CD4-positive, alpha-beta memory T cell (primary cell): ENCODE measurements at regions of chr1 and their contacts with region 1.

Region 1: GRCh38 chr1:234722904-234723720 is 113.1 kb upstream of the IRF2BP2 start:
- DNase-seq: peak in 1 of 5 donors; percentile 82
- H3K4me3 ChIP-seq: peak overlapping the region; percentile 0 to 41
- H3K4me3 Mint-ChIP-seq: peak overlapping the region; percentile 70 to 89 (median 82)
- H3K27ac ChIP-seq: peak overlapping the region; percentile 96
- H3K27ac Mint-ChIP-seq: peak overlapping the region; percentile 95 to 100 (median 98)
- H3K4me1 ChIP-seq: peaks cover 66% of the 10 kb centered on the region
- H3K4me1 Mint-ChIP-seq: peaks cover 45 to 85% (median 65%) of the 10 kb centered on the region in 4 donors
- H3K27me3 ChIP-seq: no peaks in the 10 kb centered on the region
- H3K27me3 Mint-ChIP-seq: peaks cover 0 to 3% of the 10 kb centered on the region in 2 donors

Region 2: GRCh38 chr1:234758851-234759250 is 35.7 kb after region 1 on chr1:
- CTCF ChIA-PET with region 1: interaction called, 3 read pairs
- POLR2A ChIA-PET with region 1: interaction called, 15 read pairs
- intact Hi-C with region 1: no loop called
- DNase-seq: peak; percentile 78 to 89 (median 83)
- H3K4me3 ChIP-seq: no peak overlapping the region
- H3K4me3 Mint-ChIP-seq: peak overlapping the region; percentile 27 to 85 (median 70)
- H3K27ac ChIP-seq: peak overlapping the region; percentile 36
- H3K27ac Mint-ChIP-seq: peak overlapping the region; percentile 88 to 99 (median 97)
- H3K4me1 ChIP-seq: peaks cover 39% of the 10 kb centered on the region
- H3K4me1 Mint-ChIP-seq: peaks cover 22 to 49% (median 33%) of the 10 kb centered on the region in 4 donors
- H3K27me3 ChIP-seq: no peaks in the 10 kb centered on the region
- H3K27me3 Mint-ChIP-seq: no peaks in the 10 kb centered on the region

Region 3: DNA sequence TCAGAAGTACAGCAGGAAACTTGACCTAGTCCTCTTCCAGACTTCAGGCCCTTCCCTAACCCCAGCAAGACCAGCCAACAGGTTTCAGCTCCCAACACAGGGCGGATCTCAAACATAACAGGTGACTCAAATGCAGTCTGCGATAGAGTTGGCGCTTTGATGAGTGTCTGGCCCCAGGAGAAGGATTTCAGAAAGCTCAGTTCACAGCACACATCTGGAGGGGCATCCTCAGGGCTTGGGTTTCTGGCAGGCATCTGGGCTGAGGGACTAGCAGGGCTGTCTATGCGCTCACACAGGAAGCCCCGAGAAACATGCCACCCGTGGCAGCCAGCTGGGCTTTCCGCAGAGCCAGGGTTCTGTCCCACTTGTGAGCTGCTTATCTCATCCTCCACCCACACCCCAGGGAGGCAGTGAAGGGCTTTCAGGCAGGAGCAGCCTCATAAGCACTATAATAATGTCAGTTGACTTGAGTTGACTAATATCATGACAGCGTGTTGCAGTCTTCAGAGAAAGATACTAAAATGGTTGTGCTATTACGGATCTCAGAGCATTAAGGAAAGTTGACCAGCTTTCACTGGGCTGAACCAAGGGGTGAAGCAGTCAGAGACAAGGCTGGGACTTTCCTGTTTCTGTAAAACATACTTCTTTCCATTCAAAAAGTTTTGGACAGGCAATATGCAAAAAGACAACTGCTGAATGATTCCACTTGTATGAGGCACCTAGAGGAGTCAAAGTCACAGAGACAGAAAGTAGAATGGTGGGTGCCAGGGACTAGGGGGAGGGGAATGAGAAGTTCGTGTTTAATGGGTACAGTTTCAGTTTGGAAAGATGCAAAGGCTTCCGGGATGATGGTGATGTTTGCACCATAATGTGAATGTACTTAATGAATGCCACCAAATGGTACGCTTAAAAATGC is 119.9 kb after region 1 on chr1:
- CTCF ChIA-PET with region 1: interaction called, 4 read pairs
- POLR2A ChIA-PET with region 1: interaction called, 40 read pairs
- intact Hi-C with region 1: loop called (anchors 2 kb)
- DNase-seq: peak; percentile 34 to 76 (median 44)
- H3K4me3 ChIP-seq: peak overlapping the region in 1 of 2 donors; percentile 28
- H3K4me3 Mint-ChIP-seq: peak overlapping the region; percentile 33 to 83 (median 58)
- H3K27ac ChIP-seq: peak overlapping the region; percentile 39
- H3K27ac Mint-ChIP-seq: peak overlapping the region; percentile 76 to 91 (median 83)
- H3K4me1 ChIP-seq: peaks cover 65% of the 10 kb centered on the region
- H3K4me1 Mint-ChIP-seq: peaks cover 47 to 73% (median 60%) of the 10 kb centered on the region in 4 donors
- H3K27me3 ChIP-seq: no peaks in the 10 kb centered on the region
- H3K27me3 Mint-ChIP-seq: no peaks in the 10 kb centered on the region

Region 4: DNA sequence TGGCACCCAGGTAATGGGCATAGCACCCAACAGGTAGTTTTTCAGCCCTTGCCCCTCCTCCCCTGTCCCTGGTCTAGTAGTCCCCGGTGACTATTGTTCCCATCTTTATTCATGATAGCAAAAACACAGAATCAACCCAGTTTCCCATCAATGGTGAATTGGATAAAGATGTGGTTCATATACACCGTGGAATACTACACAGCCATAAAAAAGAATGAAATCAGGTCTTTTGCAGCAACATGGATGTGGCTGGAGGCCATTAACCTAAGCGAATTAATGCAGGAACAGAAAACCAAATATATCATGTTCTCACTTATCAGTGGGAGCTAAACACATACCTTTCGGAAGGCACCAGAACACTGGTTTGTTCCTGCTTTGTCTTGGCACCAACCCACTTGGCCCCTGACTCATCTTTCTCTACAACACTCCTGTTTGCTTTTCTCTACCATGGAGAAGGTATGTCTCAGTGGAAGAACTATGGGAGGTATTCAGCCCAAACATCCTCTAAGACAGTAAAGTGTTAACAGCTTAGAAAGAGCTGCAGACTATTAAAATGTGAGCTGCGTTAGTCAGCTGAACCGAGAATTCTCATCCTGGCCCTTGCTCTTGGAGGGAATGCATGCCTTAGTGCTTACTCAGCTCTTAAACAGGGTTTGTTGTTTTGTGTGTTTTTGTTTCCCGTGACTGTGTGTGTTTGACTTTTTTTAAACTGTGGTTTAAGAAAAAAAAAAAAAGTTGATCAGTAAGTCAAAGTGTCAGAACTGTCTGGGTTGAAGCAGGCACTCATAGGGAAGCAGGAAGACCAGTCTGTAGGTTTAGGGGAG is 202.5 kb after region 1 on chr1:
- CTCF ChIA-PET with region 1: no interaction called
- POLR2A ChIA-PET with region 1: interaction called, 18 read pairs
- intact Hi-C with region 1: no loop called
- DNase-seq: peak in 4 of 5 donors; percentile 33 to 55 (median 46)
- H3K4me3 ChIP-seq: peak overlapping the region; percentile 27 to 48
- H3K4me3 Mint-ChIP-seq: peak overlapping the region; percentile 73 to 92 (median 84)
- H3K27ac ChIP-seq: no peak overlapping the region
- H3K27ac Mint-ChIP-seq: peak overlapping the region; percentile 85 to 99 (median 92)
- H3K4me1 ChIP-seq: peaks cover 49% of the 10 kb centered on the region
- H3K4me1 Mint-ChIP-seq: peaks cover 31 to 49% (median 43%) of the 10 kb centered on the region in 4 donors
- H3K27me3 ChIP-seq: no peaks in the 10 kb centered on the region
- H3K27me3 Mint-ChIP-seq: no peaks in the 10 kb centered on the region

Region 5: DNA sequence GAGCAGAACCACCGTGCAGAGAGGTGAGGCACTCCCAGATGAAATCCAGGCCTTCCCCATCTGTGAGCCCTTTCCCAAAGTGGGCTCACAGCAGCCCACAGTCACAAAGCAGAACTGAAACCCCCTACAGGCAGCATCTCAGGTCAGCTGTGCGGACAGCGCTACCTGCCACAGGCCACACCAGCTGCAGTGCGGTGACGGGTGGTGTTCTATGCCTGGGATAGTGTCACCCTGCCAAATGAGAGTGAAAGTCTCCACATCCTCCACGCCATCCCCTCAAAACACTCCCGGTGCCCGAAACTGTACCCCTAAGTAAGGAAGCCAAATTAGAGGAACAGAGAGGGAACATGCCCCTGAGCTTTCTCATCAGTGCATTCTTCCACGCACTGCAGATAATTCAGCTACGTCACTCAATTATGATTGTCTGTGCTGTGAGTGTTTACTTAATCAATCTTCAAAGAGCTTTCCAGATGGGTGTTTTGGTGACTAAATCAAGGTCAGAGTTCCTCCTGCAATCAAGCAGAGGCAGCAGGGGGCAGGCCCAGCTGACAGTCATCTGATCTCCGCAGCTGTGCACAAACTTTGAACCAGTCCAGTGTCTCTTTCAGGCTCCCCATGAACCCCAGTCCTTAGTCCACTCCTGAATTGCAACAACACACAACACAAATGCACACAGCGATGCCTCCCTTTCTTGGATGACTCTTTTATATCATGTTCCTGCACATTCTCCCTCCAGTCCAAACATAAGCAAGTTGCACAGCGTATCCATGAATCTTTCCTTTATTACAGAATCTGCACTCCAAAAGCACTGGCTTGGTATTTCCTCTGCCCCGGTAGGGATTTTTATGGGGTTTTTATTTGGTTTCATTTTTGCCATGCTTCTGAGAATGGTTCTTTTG is 255.5 kb after region 1 on chr1:
- CTCF ChIA-PET with region 1: no interaction called
- POLR2A ChIA-PET with region 1: interaction called, 27 read pairs
- intact Hi-C with region 1: no loop called
- DNase-seq: peak; percentile 72 to 87 (median 77)
- H3K4me3 ChIP-seq: peak overlapping the region in 1 of 2 donors; percentile 33
- H3K4me3 Mint-ChIP-seq: peak overlapping the region; percentile 43 to 93 (median 79)
- H3K27ac ChIP-seq: peak overlapping the region; percentile 88
- H3K27ac Mint-ChIP-seq: peak overlapping the region; percentile 96 to 99 (median 97)
- H3K4me1 ChIP-seq: peaks cover 65% of the 10 kb centered on the region
- H3K4me1 Mint-ChIP-seq: peaks cover 40 to 83% (median 53%) of the 10 kb centered on the region in 4 donors
- H3K27me3 ChIP-seq: no peaks in the 10 kb centered on the region
- H3K27me3 Mint-ChIP-seq: no peaks in the 10 kb centered on the region